ENCODE measurements at regions of chr7 and their contacts with region 1.

Region 1: GRCh38 chr7:127585044-127585953 is at the start of gene GCC1:
- DNase-seq: peak; percentile 81
- H3K4me3 ChIP-seq: peak within 1 kb of the TSS; percentile 54 to 73 (median 69)
- H3K27ac ChIP-seq: peak within 1 kb of the TSS; percentile 70
- H3K4me1 ChIP-seq: peaks cover 24% of the 10 kb centered on the region
- H3K27me3 ChIP-seq: no peaks in the 10 kb centered on the region
- CTCF ChIP-seq: no peak
- total RNA-seq, gene GCC1: 22.3 to 25.4 TPM

Region 2: GRCh38 chr7:127214956-127215718 is 370.2 kb before region 1 on chr7:
- CTCF ChIA-PET with region 1: no interaction called
- dilution Hi-C with region 1: no loop called
- in situ Hi-C with region 1: no loop called
- intact Hi-C with region 1: no loop called
- DNase-seq: no peak
- H3K4me3 ChIP-seq: no peak overlapping the region
- H3K27ac ChIP-seq: no peak overlapping the region
- H3K4me1 ChIP-seq: no peaks in the 10 kb centered on the region
- H3K27me3 ChIP-seq: no peaks in the 10 kb centered on the region
- CTCF ChIP-seq: no peak

Region 3: DNA sequence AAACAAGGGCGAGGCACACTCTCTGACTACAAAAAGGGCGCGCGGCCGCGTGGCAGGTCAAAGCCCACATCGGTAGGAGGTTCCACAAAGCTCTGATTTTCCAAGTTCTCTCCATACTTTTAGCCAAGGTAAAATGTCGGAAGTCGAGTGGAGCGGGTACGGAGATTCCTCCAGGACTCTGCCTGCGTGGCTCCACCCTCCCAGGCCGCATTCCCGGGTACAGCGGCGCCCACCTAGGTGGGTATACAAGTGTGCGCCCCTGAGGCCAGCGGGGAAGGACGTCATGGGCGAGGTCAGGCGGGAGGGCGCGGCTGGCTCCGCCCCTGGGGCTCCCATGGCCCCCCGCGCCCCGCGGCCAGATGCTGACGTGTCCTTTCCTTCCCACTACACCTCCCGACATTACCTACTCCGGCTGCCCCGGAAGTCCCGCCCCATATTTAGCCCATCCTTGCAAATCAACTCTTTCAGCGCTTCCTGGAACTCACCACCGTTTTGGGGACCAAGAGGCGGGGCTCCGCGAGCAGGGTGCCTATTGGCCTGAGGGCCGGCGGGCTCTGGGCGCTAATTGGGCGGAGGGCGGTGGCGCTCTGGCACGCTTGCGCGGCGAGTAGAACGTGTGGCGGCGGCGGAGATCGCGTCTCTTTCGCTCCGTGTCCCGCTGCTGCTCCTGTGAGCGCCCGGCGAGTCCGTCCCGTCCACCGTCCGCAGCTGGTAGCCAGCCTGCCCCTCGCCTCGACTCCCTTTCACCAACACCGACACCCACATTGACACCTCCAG is 66.4 kb after region 1 on chr7 and contains the start of gene SND1:
- CTCF ChIA-PET with region 1: no interaction called
- dilution Hi-C with region 1: loop called (anchors 5 kb)
- in situ Hi-C with region 1: no loop called
- intact Hi-C with region 1: loop called (anchors 2 kb)
- DNase-seq: peak; percentile 99
- H3K4me3 ChIP-seq: peak within 1 kb of the TSS; percentile 80 to 94 (median 82)
- H3K27ac ChIP-seq: peak within 1 kb of the TSS; percentile 92
- H3K4me1 ChIP-seq: peaks cover 28% of the 10 kb centered on the region
- H3K27me3 ChIP-seq: no peaks in the 10 kb centered on the region
- CTCF ChIP-seq: no peak
- total RNA-seq, gene SND1: 196 to 234 TPM

Region 4: GRCh38 chr7:127865466-127865865 is 280.2 kb after region 1 on chr7:
- CTCF ChIA-PET with region 1: no interaction called
- dilution Hi-C with region 1: no loop called
- in situ Hi-C with region 1: no loop called
- intact Hi-C with region 1: no loop called
- DNase-seq: peak; percentile 37
- H3K4me3 ChIP-seq: no peak overlapping the region
- H3K27ac ChIP-seq: no peak overlapping the region
- H3K4me1 ChIP-seq: no peaks in the 10 kb centered on the region
- H3K27me3 ChIP-seq: no peaks in the 10 kb centered on the region
- CTCF ChIP-seq: no peak

Region 5: GRCh38 chr7:128322040-128322643 is 736.8 kb after region 1 on chr7:
- CTCF ChIA-PET with region 1: no interaction called
- dilution Hi-C with region 1: no loop called
- in situ Hi-C with region 1: no loop called
- intact Hi-C with region 1: no loop called
- DNase-seq: peak; percentile 37
- H3K4me3 ChIP-seq: no peak overlapping the region
- H3K27ac ChIP-seq: no peak overlapping the region
- H3K4me1 ChIP-seq: no peaks in the 10 kb centered on the region
- H3K27me3 ChIP-seq: no peaks in the 10 kb centered on the region
- CTCF ChIP-seq: peak; percentile 39 to 66